Activated naive CD4-positive, alpha-beta T cell treated with anti-CD3 and anti-CD28 coated beads, Interleukin-2, amount 10 ng/mL, durations not matched to agents 7 days and 5 days (primary cell): ENCODE measurements at regions of chr19 and their contacts with region 1.

Region 1: DNA sequence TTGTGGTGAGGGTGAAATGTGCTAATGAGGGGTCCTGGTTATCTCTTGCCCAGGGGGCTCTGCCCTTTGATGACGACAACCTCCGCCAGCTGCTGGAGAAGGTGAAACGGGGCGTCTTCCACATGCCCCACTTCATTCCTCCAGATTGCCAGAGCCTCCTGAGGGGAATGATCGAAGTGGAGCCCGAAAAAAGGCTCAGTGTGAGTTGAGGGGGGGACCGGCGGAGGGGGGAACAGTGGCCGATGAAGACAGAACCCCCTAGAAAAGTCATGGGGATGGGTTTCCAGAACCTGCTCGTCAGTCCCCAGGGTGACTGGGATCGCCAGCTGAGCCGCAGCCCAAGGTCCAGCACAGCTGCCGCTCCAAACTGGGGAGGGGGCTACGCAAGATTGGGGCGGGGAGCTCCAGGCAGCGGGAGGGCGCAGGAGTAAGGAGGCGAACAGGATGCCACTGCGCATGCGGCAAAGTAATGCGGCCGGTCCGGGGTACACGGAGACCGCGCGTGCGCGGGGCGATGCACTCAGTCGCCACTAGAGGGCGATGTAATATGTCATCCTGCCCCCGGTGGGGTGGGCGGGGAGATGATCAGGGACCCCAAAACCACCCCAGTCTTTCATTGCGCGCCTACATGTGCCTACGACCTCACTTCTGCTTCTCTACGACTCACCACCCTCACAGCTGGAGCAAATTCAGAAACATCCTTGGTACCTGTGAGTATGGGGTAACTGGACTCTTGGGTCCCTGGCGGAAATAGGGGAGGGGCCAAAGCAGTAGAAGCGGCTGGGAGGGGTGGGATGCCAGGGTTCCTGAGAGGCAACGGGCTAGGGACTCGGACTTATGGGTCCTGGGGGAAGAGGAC is 17.9 kb downstream of the BRSK1 start:
- DNase-seq: peak; percentile 97
- H3K4me3 Mint-ChIP-seq: peak overlapping the region; percentile 82
- H3K27ac Mint-ChIP-seq: peak overlapping the region; percentile 87
- H3K4me1 Mint-ChIP-seq: peaks cover 19% of the 10 kb centered on the region
- H3K27me3 Mint-ChIP-seq: peaks cover 27% of the 10 kb centered on the region

Region 2: DNA sequence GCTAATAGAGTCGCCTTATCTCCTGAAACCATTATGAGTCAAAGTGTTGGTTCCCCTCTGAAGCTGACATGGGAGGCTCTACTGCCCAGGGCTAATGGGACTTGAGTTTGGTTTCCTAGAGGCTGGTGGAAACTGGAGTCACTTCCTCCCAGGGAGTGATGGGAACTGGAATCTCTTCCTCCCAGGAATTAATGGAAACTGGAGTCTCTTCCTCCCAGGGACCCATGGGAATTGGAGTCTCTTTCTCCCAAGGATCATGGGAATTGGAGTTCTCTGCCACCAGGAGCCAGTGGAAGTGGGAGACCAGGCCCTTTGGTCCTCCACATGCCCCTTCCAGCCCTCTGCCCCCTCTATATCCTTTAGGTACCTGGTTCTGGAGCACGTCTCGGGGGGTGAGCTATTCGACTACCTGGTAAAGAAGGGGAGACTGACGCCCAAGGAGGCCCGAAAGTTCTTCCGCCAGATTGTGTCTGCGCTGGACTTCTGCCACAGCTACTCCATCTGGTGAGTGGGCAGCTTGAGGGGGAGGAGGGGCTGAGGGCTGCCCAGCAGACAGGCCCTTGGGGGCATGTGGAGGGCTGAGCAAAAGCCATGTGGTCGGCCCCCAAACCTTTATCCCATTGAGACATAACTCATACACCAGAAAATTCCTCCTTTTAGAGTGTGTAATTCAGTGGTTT is 12.4 kb before region 1 on chr19:
- CTCF ChIA-PET with region 1: interaction called, 26 read pairs
- DNase-seq: no peak
- H3K4me3 Mint-ChIP-seq: no peak overlapping the region
- H3K27ac Mint-ChIP-seq: no peak overlapping the region
- H3K4me1 Mint-ChIP-seq: peaks cover 9% of the 10 kb centered on the region
- H3K27me3 Mint-ChIP-seq: peaks cover 5% of the 10 kb centered on the region

Region 3: GRCh38 chr19:55312621-55313512 is 11.2 kb after region 1 on chr19:
- CTCF ChIA-PET with region 1: interaction called, 17 read pairs
- DNase-seq: no peak
- H3K4me3 Mint-ChIP-seq: no peak overlapping the region
- H3K27ac Mint-ChIP-seq: no peak overlapping the region
- H3K4me1 Mint-ChIP-seq: no peaks in the 10 kb centered on the region
- H3K27me3 Mint-ChIP-seq: peaks cover 3% of the 10 kb centered on the region

Region 4: GRCh38 chr19:55339048-55339888 is 37.6 kb after region 1 on chr19 and contains the start of gene KMT5C:
- CTCF ChIA-PET with region 1: interaction called, 12 read pairs
- DNase-seq: peak; percentile 100
- H3K4me3 Mint-ChIP-seq: peak within 1 kb of the TSS; percentile 90
- H3K27ac Mint-ChIP-seq: peak within 1 kb of the TSS; percentile 94
- H3K4me1 Mint-ChIP-seq: peaks cover 27% of the 10 kb centered on the region
- H3K27me3 Mint-ChIP-seq: peaks cover 21% of the 10 kb centered on the region

Region 5: DNA sequence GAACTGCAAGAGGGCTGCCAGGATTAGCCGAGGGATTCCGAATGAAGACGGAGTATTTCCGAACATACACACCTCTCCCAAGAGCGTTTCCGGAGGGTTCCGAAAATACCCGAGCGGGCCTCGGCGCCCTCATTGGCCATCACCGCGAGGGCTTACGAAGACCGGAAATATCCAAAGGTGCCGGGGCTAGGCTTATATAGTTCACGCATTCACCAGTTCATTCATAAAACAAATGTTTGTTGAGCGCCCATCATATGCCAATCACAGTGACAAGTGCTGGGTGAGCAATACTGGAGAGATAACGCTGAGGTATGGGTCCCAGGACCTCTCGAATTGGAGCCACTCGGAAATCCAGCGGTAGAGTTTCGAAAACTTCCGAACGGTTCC is 83.7 kb after region 1 on chr19:
- CTCF ChIA-PET with region 1: interaction called, 25 read pairs
- DNase-seq: peak; percentile 98
- H3K4me3 Mint-ChIP-seq: peak overlapping the region; percentile 97
- H3K27ac Mint-ChIP-seq: peak overlapping the region; percentile 97
- H3K4me1 Mint-ChIP-seq: peaks cover 71% of the 10 kb centered on the region
- H3K27me3 Mint-ChIP-seq: no peaks in the 10 kb centered on the region